Activated CD8-positive, alpha-beta T cell treated with anti-CD3 and anti-CD28 coated beads for 36 hours (primary cell): ENCODE measurements at regions of chr10 and their contacts with region 1.

Region 1: GRCh38 chr10:96413151-96413787 is 54.5 kb upstream of the OPALIN start:
- DNase-seq: peak; percentile 13
- ATAC-seq: no peak
- H3K4me3 Mint-ChIP-seq: no peak overlapping the region
- H3K27ac Mint-ChIP-seq: no peak overlapping the region
- H3K4me1 Mint-ChIP-seq: no peaks in the 10 kb centered on the region
- H3K27me3 Mint-ChIP-seq: peaks cover 7% of the 10 kb centered on the region
- CTCF ChIP-seq: no peak

Region 2: GRCh38 chr10:96395931-96396877 is 17.1 kb before region 1 on chr10:
- CTCF ChIA-PET with region 1: interaction called, 17 read pairs
- POLR2A ChIA-PET with region 1: no interaction called
- intact Hi-C with region 1: no loop called
- DNase-seq: peak; percentile 79
- ATAC-seq: peak; percentile 94
- H3K4me3 Mint-ChIP-seq: no peak overlapping the region
- H3K27ac Mint-ChIP-seq: no peak overlapping the region
- H3K4me1 Mint-ChIP-seq: no peaks in the 10 kb centered on the region
- H3K27me3 Mint-ChIP-seq: peaks cover 16% of the 10 kb centered on the region
- CTCF ChIP-seq: peak; percentile 89

Region 3: DNA sequence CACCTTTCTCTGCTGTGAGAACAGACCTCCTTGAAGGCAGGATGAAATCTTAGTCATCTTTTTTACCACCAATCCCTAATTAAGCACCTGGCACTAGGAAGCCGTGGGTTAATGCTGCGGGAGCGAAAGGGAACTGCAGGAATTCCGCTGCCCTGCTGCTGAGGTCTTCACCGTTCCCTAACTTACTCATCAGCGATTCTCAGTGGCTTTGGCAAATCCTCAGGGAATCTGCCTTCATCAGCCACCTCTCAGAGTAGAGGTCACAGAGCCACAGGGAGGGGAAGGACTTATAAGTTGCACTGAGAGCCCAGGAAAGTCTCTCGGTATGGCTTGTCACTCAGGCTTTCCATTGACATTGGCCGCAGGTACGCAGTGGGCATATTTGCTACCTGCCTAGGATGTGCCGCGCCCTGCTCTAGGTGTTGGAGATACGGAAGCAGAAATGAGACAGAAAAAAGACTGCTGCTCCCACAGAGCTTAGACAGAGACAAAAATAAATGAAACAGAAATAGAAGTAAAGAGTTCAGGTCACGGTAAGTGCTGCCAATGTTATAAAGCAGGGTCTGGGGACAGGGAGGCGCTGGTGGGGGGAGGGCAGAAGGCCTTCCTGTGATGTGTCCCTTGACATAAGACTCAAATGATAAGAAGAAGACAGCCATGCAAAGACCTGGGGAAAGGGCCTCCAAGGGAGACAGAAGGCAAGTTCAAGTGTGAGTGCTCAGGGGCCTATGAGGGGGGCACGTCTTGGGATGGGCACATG is 18.1 kb after region 1 on chr10:
- CTCF ChIA-PET with region 1: no interaction called
- POLR2A ChIA-PET with region 1: no interaction called
- intact Hi-C with region 1: no loop called
- DNase-seq: no peak
- ATAC-seq: no peak
- H3K4me3 Mint-ChIP-seq: no peak overlapping the region
- H3K27ac Mint-ChIP-seq: no peak overlapping the region
- H3K4me1 Mint-ChIP-seq: no peaks in the 10 kb centered on the region
- H3K27me3 Mint-ChIP-seq: peaks cover 16% of the 10 kb centered on the region
- CTCF ChIP-seq: no peak

Region 4: GRCh38 chr10:96450529-96451207 is 37.4 kb after region 1 on chr10:
- CTCF ChIA-PET with region 1: no interaction called
- POLR2A ChIA-PET with region 1: no interaction called
- intact Hi-C with region 1: no loop called
- DNase-seq: no peak
- ATAC-seq: no peak
- H3K4me3 Mint-ChIP-seq: no peak overlapping the region
- H3K27ac Mint-ChIP-seq: no peak overlapping the region
- H3K4me1 Mint-ChIP-seq: no peaks in the 10 kb centered on the region
- H3K27me3 Mint-ChIP-seq: peaks cover 2% of the 10 kb centered on the region
- CTCF ChIP-seq: no peak